Endothelial cell of umbilical vein (primary cell): ENCODE measurements at regions of chr6 and their contacts with region 1.

Region 1: DNA sequence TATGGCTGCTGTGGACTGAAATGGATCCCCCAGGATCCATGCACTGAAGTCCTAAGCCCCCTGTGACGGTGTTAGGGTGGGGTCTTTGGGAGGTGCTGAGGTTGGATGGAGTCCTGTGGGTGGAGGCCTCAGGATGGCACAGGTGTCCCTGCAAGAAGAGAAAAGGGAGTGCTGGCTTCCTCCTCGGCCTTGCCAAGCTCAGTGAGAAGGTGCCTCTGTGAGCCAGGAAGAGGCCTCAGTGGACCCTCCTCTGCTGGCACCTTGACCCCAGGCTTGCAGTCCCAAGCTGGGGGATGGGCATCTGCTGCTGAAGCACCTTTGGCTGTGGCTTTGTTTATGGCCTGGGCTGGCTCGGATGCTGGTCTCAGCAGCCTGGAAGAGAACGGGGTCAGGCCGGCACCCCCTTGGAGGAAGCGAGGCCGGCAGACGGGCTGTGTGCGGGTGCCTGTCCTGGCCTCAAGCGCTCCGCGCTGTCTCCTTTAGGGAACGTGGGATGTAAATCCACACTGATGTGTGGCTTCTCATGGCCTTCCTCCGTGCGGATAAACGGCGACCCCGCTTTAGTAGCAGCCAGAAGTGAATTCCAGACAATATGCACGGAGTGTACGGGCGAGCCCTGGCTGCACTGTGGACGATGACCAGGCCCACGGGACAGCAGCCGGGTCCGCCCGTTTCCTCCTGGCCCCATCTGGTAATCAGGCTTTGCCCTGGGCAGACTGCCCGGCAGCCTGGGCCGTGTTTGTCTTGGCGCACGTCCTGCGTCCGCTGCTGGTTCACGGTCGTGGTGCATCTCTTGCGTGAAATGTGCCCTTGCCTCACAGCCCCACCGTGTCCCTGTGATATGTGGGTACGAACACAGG is 182.6 kb downstream of the ERMARD start:
- DNase-seq: peak; percentile 96
- H3K4me3 ChIP-seq: no peak overlapping the region
- H3K27ac ChIP-seq: peak overlapping the region; percentile 88
- H3K4me1 ChIP-seq: peaks cover 25% of the 10 kb centered on the region
- H3K27me3 ChIP-seq: no peaks in the 10 kb centered on the region
- CTCF ChIP-seq: no peak
- POLR2A ChIP-seq: peak; percentile 52

Region 2: GRCh38 chr6:169498916-169499513 is 435.1 kb before region 1 on chr6:
- CTCF ChIA-PET with region 1: no interaction called
- POLR2A ChIA-PET with region 1: no interaction called
- dilution Hi-C with region 1: no loop called
- intact Hi-C with region 1: no loop called
- DNase-seq: no peak
- H3K4me3 ChIP-seq: no peak overlapping the region
- H3K27ac ChIP-seq: no peak overlapping the region
- H3K4me1 ChIP-seq: no peaks in the 10 kb centered on the region
- H3K27me3 ChIP-seq: no peaks in the 10 kb centered on the region
- CTCF ChIP-seq: no peak
- POLR2A ChIP-seq: no peak

Region 3: GRCh38 chr6:169723200-169723909 is 210.7 kb before region 1 on chr6:
- CTCF ChIA-PET with region 1: no interaction called
- POLR2A ChIA-PET with region 1: no interaction called
- dilution Hi-C with region 1: no loop called
- intact Hi-C with region 1: loop called (anchors 10 kb)
- DNase-seq: peak; percentile 72
- H3K4me3 ChIP-seq: peak overlapping the region; percentile 25 to 95 (median 71)
- H3K27ac ChIP-seq: peak overlapping the region; percentile 77
- H3K4me1 ChIP-seq: peaks cover 30% of the 10 kb centered on the region
- H3K27me3 ChIP-seq: no peaks in the 10 kb centered on the region
- CTCF ChIP-seq: no peak
- POLR2A ChIP-seq: no peak

Region 4: DNA sequence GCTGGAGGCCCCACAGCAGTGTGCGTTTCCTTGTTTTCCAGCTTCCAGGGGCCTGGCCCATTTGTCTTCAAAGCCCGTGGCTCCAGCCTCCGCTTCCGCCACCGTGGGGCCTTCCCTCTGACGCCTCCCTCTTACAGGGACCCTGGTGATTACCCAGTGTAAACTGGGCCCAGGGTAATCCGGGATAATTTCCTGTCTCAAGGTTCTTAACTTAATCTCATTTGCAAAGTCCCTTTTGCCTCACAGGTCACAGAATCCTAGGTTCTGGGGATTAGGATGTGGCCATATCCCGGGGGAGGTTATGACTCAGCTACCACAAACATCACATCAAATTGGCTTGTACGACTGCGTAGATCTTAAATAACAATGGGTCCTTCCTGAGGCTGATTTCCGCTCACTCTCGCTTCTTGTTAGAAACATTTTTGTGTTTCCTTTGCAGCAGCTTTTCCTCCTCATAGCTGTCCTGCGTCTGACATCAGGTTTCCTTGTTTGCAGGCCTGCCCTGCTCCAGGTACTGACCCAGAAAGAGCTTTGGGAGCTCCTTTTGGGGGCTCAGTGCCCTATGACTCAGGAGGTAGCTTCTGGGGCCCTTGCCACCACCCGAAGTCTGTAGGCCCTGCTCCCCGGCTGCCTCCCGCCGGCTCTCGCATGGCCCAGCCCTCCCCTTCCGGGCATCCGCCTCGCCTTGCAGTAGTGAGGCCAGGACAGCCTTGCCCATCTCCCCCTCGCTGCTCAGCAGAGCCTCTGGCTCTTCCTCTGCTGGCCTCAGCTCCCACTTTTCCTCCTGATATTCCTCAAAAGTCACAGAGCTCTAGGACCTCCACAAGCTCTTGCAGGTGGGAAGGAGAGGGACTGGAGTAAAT is 82.2 kb before region 1 on chr6:
- CTCF ChIA-PET with region 1: interaction called, 11 read pairs
- POLR2A ChIA-PET with region 1: interaction called, 5 read pairs
- dilution Hi-C with region 1: no loop called
- intact Hi-C with region 1: loop called (anchors 1 kb)
- DNase-seq: peak; percentile 93
- H3K4me3 ChIP-seq: peak overlapping the region in 1 of 3 experiments; percentile 6
- H3K27ac ChIP-seq: peak overlapping the region; percentile 95
- H3K4me1 ChIP-seq: peaks cover 24% of the 10 kb centered on the region
- H3K27me3 ChIP-seq: no peaks in the 10 kb centered on the region
- CTCF ChIP-seq: no peak
- POLR2A ChIP-seq: peak; percentile 58

Region 5: GRCh38 chr6:169905041-169905807 is 28.8 kb before region 1 on chr6:
- CTCF ChIA-PET with region 1: interaction called, 11 read pairs
- POLR2A ChIA-PET with region 1: interaction called, 4 read pairs
- dilution Hi-C with region 1: no loop called
- intact Hi-C with region 1: loop called (anchors 1 kb)
- DNase-seq: peak; percentile 99
- H3K4me3 ChIP-seq: no peak overlapping the region
- H3K27ac ChIP-seq: peak overlapping the region; percentile 75
- H3K4me1 ChIP-seq: peaks cover 28% of the 10 kb centered on the region
- H3K27me3 ChIP-seq: no peaks in the 10 kb centered on the region
- CTCF ChIP-seq: no peak
- POLR2A ChIP-seq: peak; percentile 74

Region 6: GRCh38 chr6:169959136-169960002 is 25.3 kb after region 1 on chr6:
- CTCF ChIA-PET with region 1: interaction called, 3 read pairs
- POLR2A ChIA-PET with region 1: interaction called, 3 read pairs
- dilution Hi-C with region 1: no loop called
- intact Hi-C with region 1: loop called (anchors 2 kb)
- DNase-seq: peak; percentile 26
- H3K4me3 ChIP-seq: no peak overlapping the region
- H3K27ac ChIP-seq: no peak overlapping the region
- H3K4me1 ChIP-seq: peaks cover 4% of the 10 kb centered on the region
- H3K27me3 ChIP-seq: peaks cover 0 to 3% of the 10 kb centered on the region in 2 experiments
- CTCF ChIP-seq: peak in 1 of 2 donors; percentile 10
- POLR2A ChIP-seq: no peak

Region 7: GRCh38 chr6:170290306-170291128 is 356.4 kb after region 1 on chr6 and contains the start of gene DLL1:
- CTCF ChIA-PET with region 1: no interaction called
- POLR2A ChIA-PET with region 1: no interaction called
- dilution Hi-C with region 1: no loop called
- intact Hi-C with region 1: loop called (anchors 1 kb)
- DNase-seq: peak; percentile 52
- H3K4me3 ChIP-seq: peak within 1 kb of the TSS; percentile 60 to 82 (median 73)
- H3K27ac ChIP-seq: no peak within 1 kb of the TSS
- H3K4me1 ChIP-seq: peaks cover 24% of the 10 kb centered on the region
- H3K27me3 ChIP-seq: peaks cover 35 to 66% of the 10 kb centered on the region in 2 experiments
- CTCF ChIP-seq: no peak
- POLR2A ChIP-seq: peak; percentile 12
- total RNA-seq, gene DLL1: 2.0 and 2.3 TPM in 2 replicates